ENCODE measurements at regions of chr6 and their contacts with region 1.

Region 1: GRCh38 chr6:19759117-19759880 is 77.9 kb upstream of the ID4 start:
- DNase-seq: no peak
- ATAC-seq: no peak
- H3K4me3 ChIP-seq: no peak overlapping the region
- H3K4me3 Mint-ChIP-seq: no peak overlapping the region
- H3K27ac ChIP-seq: no peak overlapping the region
- H3K27ac Mint-ChIP-seq: no peak overlapping the region
- H3K4me1 ChIP-seq: no peaks in the 10 kb centered on the region
- H3K4me1 Mint-ChIP-seq: no peaks in the 10 kb centered on the region
- H3K27me3 ChIP-seq: no peaks in the 10 kb centered on the region
- H3K27me3 Mint-ChIP-seq: no peaks in the 10 kb centered on the region
- CTCF ChIP-seq: no peak

Region 2: DNA sequence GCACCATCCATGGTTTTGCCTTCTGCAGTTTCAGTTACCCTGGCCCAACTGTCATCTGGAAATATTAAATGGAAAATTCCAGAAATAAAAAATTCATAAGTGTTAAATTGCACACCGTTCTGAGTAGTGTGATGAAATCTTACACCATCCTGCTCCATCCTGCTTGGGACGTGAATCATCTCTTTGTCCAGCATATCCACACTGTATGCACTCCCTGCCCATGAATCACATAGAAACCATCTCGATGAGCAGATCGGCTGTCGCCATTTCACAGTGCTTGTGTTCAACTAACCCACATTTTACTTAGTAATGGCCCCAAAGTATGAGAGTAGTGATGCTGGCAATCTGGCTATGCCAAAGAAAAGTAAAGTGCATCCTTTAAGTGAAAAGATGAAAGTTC is 28.0 kb before region 1 on chr6:
- CTCF ChIA-PET with region 1: no interaction called
- POLR2A ChIA-PET with region 1: no interaction called
- intact Hi-C with region 1: no loop called
- DNase-seq: no peak
- ATAC-seq: no peak
- H3K4me3 ChIP-seq: no peak overlapping the region
- H3K4me3 Mint-ChIP-seq: no peak overlapping the region
- H3K27ac ChIP-seq: no peak overlapping the region
- H3K27ac Mint-ChIP-seq: no peak overlapping the region
- H3K4me1 ChIP-seq: no peaks in the 10 kb centered on the region
- H3K4me1 Mint-ChIP-seq: no peaks in the 10 kb centered on the region
- H3K27me3 ChIP-seq: no peaks in the 10 kb centered on the region
- H3K27me3 Mint-ChIP-seq: no peaks in the 10 kb centered on the region
- CTCF ChIP-seq: no peak

Region 3: GRCh38 chr6:19838446-19839236 is 79.3 kb after region 1 on chr6:
- CTCF ChIA-PET with region 1: no interaction called
- POLR2A ChIA-PET with region 1: no interaction called
- intact Hi-C with region 1: no loop called
- DNase-seq: no peak
- ATAC-seq: no peak
- H3K4me3 ChIP-seq: no peak overlapping the region
- H3K4me3 Mint-ChIP-seq: peak overlapping the region; percentile 50
- H3K27ac ChIP-seq: no peak overlapping the region
- H3K27ac Mint-ChIP-seq: no peak overlapping the region
- H3K4me1 ChIP-seq: peaks cover 4 to 10% of the 10 kb centered on the region in 2 donors
- H3K4me1 Mint-ChIP-seq: peaks cover 10% of the 10 kb centered on the region
- H3K27me3 ChIP-seq: peaks cover 0 to 26% (median 12%) of the 10 kb centered on the region in 4 experiments
- H3K27me3 Mint-ChIP-seq: peaks cover 53% of the 10 kb centered on the region
- CTCF ChIP-seq: no peak

Region 4: DNA sequence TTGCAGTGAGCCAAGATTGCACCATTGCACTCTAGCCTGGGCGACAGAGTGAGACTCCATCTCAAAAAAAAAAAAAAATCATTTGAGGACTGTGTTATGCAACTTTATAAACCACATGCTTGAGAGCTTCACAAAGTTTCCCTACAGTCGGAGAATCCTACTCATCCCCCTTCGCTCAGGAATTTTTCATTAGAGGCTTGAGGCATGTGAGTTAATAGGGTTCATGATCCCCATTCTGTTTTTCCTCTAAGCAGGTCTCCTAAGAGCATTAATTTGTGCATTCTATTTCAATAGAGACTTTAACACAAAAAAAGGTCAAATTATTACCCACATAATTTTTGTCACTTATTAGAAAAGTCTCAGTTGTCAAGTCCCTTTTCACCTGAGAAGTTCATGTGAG is 1730.5 kb after region 1 on chr6:
- CTCF ChIA-PET with region 1: no interaction called
- POLR2A ChIA-PET with region 1: no interaction called
- intact Hi-C with region 1: loop called (anchors 10 kb)
- DNase-seq: no peak
- ATAC-seq: no peak
- H3K4me3 ChIP-seq: no peak overlapping the region
- H3K4me3 Mint-ChIP-seq: no peak overlapping the region
- H3K27ac ChIP-seq: no peak overlapping the region
- H3K27ac Mint-ChIP-seq: no peak overlapping the region
- H3K4me1 ChIP-seq: no peaks in the 10 kb centered on the region
- H3K4me1 Mint-ChIP-seq: no peaks in the 10 kb centered on the region
- H3K27me3 ChIP-seq: no peaks in the 10 kb centered on the region
- H3K27me3 Mint-ChIP-seq: peaks cover 3% of the 10 kb centered on the region
- CTCF ChIP-seq: no peak

Measured in B cell (primary cell).